HAP-1 (cell line): ENCODE measurements at regions of chr20 and their contacts with region 1.

Region 1: GRCh38 chr20:32982617-32983458 is 21.4 kb downstream of the SUN5 start:
- DNase-seq: peak in 1 of 2 experiments; percentile 24
- H3K4me3 ChIP-seq: no peak overlapping the region
- H3K4me1 ChIP-seq: no peaks in the 10 kb centered on the region
- H3K27me3 ChIP-seq: no peaks in the 10 kb centered on the region

Region 2: GRCh38 chr20:32189691-32190615 is 792.9 kb before region 1 on chr20:
- in situ Hi-C with region 1: no loop called
- DNase-seq: no peak
- H3K4me3 ChIP-seq: no peak overlapping the region
- H3K4me1 ChIP-seq: no peaks in the 10 kb centered on the region
- H3K27me3 ChIP-seq: no peaks in the 10 kb centered on the region

Region 3: GRCh38 chr20:32681175-32682084 is 301.4 kb before region 1 on chr20:
- in situ Hi-C with region 1: no loop called
- DNase-seq: no peak
- H3K4me3 ChIP-seq: no peak overlapping the region
- H3K4me1 ChIP-seq: no peaks in the 10 kb centered on the region
- H3K27me3 ChIP-seq: no peaks in the 10 kb centered on the region

Region 4: GRCh38 chr20:33046412-33046811 is 63.6 kb after region 1 on chr20:
- in situ Hi-C with region 1: loop called (anchors 10 kb)
- DNase-seq: no peak
- H3K4me3 ChIP-seq: no peak overlapping the region
- H3K4me1 ChIP-seq: no peaks in the 10 kb centered on the region
- H3K27me3 ChIP-seq: no peaks in the 10 kb centered on the region